ENCODE measurements at regions of chr6 and their contacts with region 1.

Region 1: DNA sequence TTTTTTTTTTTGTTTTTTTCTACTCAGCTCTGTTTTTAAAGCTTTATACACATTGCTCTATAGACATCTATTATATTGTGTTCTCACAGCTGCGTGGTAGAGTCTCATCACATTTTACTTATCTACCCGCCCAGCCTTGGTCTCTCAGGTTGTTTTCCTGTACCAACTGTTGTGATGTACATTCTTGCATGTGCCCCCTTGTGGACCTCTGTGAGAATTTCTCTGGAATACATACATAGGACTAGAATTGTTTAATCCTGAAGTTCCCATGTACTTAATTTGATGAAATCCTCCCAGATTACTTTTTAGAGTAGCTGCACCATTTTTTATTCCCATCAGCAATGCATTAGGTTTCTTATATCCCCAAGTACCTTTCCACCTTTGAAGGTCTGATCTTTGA is 40.4 kb upstream of the TINAG start:
- DNase-seq: peak in 1 of 3 donors; percentile 46
- ATAC-seq: peak; percentile 66 to 76 (median 70)
- H3K4me3 ChIP-seq: no peak overlapping the region
- H3K27ac ChIP-seq: no peak overlapping the region
- H3K4me1 ChIP-seq: no peaks in the 10 kb centered on the region
- H3K27me3 ChIP-seq: no peaks in the 10 kb centered on the region
- CTCF ChIP-seq: peak; percentile 31 to 62 (median 48)
- POLR2A ChIP-seq: no peak

Region 2: GRCh38 chr6:53986165-53986720 is 281.6 kb before region 1 on chr6:
- intact Hi-C with region 1: loop called in 1 of 2 experiments (anchors 10 kb)
- DNase-seq: peak in 1 of 3 donors; percentile 62
- ATAC-seq: peak; percentile 93 to 96 (median 94)
- H3K4me3 ChIP-seq: no peak overlapping the region
- H3K27ac ChIP-seq: peak overlapping the region in 1 of 3 donors; percentile 18
- H3K4me1 ChIP-seq: peaks cover 0 to 14% (median 0%) of the 10 kb centered on the region in 4 donors
- H3K27me3 ChIP-seq: no peaks in the 10 kb centered on the region
- CTCF ChIP-seq: peak; percentile 73 to 90 (median 86)
- POLR2A ChIP-seq: no peak